BJ (cell line): ENCODE measurements at regions of chr6 and their contacts with region 1.

Region 1: DNA sequence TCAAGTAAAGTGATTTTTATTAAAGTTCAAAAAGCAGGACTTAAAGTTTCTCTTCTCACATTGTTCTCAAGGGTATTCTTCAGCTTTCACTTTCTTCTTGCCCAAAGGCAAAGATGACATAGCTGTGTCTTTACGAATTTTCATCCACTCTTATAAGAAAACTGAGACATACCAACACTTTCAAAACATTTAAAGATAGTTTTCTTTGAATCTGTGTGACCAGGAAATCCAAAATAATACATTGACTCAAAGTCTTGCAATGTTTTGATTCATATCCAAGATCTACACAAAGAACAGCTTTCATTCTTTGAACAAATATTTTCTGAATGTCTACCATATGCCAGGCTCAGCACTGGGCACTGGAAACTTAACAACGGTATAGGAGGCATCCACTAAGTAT is 117.9 kb downstream of the SIM1 start:
- DNase-seq: peak; percentile 67
- H3K4me3 ChIP-seq: no peak overlapping the region
- H3K27me3 ChIP-seq: no peaks in the 10 kb centered on the region
- CTCF ChIP-seq: no peak

Region 2: DNA sequence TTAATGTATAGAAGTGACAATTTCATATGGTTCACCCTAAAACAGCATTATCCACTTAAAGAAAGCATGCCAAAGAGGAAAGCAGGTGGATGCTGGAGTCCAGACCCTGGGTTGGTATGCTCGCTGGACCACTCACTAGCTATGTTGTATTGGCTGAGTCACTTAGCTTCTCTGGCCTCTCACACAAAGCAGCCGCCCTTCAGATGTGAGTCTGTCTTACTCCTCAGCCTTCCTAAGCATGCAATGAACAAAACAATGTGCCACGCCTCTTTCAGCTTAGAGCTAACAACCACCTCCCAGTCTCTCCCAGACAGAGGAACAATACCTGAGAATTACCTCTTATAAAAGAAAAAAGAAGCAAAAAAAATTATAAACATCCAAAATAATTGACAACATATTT is 88.5 kb after region 1 on chr6:
- CTCF ChIA-PET with region 1: no interaction called
- POLR2A ChIA-PET with region 1: interaction called, 20 read pairs
- DNase-seq: no peak
- H3K4me3 ChIP-seq: no peak overlapping the region
- H3K27me3 ChIP-seq: no peaks in the 10 kb centered on the region
- CTCF ChIP-seq: no peak